Posterior cingulate gyrus (tissue), 11 donors: ENCODE measurements at regions of chr11 and their contacts with region 1.

Region 1: DNA sequence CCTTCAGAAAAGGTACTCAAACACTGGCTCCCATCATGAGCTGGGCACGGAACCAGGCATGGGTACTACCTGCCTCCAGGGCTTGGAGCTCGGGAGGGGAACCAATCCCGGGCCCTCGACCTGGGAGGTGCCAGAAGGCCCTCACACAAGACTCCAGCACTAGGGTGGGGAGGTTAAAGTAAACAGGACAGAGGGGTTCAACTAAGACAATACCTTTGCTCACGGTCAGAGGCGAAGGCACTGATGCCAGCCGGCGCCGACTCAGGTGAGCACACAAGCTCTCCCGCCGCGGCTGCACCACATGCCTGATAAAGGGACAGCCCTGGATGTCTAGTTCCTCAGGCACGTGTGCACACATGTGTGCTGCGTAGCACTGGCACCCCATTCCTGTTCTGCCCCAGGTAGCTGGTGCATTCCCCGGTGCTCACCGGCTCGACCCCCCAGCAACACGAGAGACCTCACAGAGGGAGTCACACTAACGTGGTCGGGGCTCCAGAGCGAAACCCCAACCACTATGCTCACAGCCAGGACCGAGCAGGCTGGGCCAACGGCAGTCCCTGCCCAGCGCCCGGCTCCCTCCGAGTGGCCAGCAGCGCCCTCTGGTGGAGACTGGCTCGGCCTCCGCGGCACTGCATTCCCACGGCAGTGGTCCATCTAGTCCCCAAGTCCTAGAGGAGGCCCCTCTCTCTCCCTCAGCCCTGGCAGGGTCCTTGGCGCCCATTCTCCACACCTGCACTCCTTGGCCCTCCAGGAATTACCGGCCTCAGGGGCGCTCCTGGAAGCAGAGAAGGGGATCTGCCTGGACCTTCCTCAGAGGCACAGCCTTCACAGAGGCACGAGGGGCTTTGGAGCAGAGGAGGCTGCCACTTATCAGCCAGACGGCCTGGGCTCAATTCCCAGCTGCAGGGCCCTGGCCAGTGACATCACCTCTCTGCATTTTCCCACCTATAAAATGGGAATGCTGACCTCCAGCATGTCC is 28.8 kb upstream of the MOB2 start:
- DNase-seq: peak; percentile 80 to 98 (median 92)

Region 2: GRCh38 chr11:1202776-1203504 is 312.4 kb before region 1 on chr11:
- intact Hi-C with region 1: loop called (anchors 5 kb)
- DNase-seq: peak; percentile 44 to 94 (median 62)

Region 3: DNA sequence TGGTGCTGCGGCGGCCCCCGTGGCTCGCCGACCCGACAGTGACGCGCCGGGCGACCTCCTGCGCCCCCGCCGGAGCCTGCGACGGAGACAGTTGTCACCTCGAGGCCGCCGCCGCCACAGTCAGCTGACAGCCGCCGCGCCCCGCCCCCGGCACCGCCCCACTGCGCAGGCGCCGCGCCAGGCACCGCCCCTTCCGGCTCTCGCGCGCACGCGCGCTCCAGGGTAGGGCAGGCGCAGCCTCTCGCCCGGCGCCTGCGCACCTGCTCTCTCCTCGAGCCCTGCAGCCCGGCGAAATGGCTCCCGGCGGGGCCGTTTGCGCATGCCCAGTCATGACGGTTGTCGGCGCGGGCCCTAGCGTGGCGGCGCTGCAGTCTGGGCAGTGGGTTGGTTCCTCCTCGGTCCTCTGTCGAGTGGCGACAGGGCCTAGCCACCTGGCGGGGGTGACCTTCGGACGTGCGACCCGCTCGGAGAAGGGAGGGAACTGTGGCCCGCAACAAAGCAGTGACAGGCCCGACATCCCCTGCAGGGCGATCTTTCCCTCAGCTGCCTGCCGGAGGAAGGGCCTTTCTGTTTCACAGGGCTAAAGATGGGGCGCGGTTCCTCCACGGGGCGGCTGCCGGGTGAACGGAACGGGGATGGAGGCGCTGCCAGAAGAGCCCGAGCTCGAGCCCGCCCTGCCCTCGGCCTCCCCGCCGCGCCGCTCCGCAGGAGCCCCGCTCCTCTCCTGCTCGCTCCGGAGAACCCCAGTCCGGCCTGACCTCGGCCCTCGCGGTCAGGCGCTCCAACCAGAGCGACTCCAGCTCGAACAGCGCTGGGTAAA is 205.7 kb before region 1 on chr11 and contains the start of gene TOLLIP:
- intact Hi-C with region 1: loop called (anchors 2 kb)
- DNase-seq: peak; percentile 91 to 99 (median 96)

Region 4: GRCh38 chr11:1401656-1402221 is 113.6 kb before region 1 on chr11:
- intact Hi-C with region 1: loop called (anchors 10 kb)
- DNase-seq: peak; percentile 61 to 97 (median 76)

Region 5: DNA sequence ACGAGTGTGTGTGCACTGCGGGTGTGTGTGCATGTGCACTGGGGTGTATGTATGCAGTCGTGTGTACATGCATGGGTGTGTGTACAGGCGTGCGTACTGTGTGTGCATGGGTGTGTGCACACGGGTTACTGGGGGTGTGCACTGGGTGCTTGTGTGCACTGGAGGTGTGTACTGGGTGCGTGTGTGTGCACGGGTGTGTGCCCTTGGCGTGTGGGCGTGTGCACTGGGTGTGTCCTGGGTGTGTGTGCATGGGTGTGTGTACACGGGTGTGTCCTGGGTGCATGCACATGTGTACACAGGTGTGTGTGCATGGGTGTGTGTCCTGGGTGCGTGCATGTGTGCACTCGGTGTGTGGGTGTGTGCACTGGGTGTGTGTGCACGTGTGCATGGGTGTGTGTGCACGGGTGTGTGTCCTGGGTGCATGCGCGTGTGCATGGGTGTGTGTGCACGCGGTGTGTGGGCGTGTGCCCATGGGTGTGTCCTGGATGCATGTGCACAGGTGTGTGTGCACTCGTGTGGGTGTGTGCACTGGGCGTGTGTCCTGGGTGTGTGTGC is 86.5 kb before region 1 on chr11:
- intact Hi-C with region 1: no loop called
- DNase-seq: no peak

Region 6: DNA sequence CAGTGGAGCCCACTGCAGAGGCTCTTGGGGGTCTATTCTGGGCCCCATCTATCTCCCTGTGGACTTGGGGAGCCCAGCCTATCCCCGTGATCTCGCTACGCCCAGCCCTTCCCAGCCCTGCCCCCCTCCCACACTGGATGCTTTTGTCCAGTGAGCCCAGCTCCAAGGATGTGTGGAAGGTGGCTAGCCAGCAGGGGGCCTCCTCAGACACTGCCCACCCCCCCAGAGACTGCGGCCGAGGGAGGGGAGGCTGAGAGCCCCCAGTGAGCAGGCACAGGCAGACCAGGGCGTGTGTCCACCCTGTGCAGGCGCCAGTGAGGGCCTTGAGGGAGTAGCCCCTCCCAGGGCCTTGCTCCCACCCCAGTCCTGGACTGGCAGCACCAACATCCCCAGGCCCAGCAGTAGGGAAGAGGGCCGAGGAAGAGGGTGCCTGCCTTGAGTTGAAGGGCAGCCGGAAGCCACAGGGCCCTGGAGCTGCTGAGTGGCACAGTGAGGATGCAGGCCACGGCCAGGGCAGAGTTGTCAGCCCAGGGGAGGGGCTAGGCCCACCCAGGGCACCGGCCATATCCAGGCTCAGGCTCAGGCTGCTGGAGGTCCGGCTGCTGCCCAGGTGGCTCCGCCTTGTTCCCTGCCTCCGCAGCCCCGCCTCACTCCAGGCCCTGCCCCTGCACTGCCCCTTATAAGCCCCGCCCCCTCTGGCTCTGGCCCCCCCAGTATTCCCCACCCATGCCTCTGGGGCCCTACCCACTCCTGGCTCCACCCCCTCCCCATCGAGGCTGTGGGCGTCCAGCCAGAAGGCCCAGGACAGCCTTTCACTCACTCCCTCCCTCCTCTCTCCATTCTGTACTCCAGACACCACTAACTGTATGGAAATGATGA is 56.8 kb before region 1 on chr11:
- intact Hi-C with region 1: loop called (anchors 5 kb)
- DNase-seq: peak in 4 of 10 donors; percentile 31 to 46 (median 40)

Region 7: GRCh38 chr11:1749414-1750312 is 234.3 kb after region 1 on chr11:
- intact Hi-C with region 1: no loop called
- DNase-seq: peak in 4 of 10 donors; percentile 41 to 90 (median 88)